Naive thymus-derived CD4-positive, alpha-beta T cell (primary cell): ENCODE measurements at regions of chr9 and their contacts with region 1.

Region 1: DNA sequence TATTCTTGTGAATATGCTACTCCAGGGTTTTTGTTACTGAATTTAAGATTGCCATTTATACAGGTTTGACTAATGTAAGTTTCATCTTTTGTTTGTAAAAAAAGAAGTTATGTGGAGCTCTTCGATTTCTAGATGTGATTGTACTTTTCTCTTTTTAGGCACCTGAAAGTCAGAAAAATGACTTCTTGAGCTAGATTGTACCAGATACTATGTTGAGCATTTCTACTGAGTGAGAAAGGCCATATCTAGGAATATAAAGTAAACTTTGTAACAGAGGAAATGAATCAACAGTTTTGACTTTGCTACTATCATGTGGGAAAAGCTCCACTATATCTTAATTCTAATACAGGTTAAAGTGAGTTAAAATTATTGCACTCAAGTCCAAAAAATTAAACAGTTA is 25.1 kb downstream of the SMC5 start:
- DNase-seq: no peak
- ATAC-seq: no peak
- H3K4me3 ChIP-seq: no peak overlapping the region
- H3K4me3 Mint-ChIP-seq: no peak overlapping the region
- H3K27ac ChIP-seq: no peak overlapping the region
- H3K27ac Mint-ChIP-seq: no peak overlapping the region
- H3K4me1 ChIP-seq: no peaks in the 10 kb centered on the region
- H3K4me1 Mint-ChIP-seq: peaks cover 0 to 20% (median 5%) of the 10 kb centered on the region in 7 donors
- H3K27me3 ChIP-seq: no peaks in the 10 kb centered on the region
- H3K27me3 Mint-ChIP-seq: no peaks in the 10 kb centered on the region

Region 2: GRCh38 chr9:70318002-70318401 is 34.2 kb after region 1 on chr9:
- CTCF ChIA-PET with region 1: no interaction called
- POLR2A ChIA-PET with region 1: no interaction called
- intact Hi-C with region 1: loop called in 1 of 2 experiments (anchors 5 kb)
- DNase-seq: no peak
- ATAC-seq: no peak
- H3K4me3 ChIP-seq: no peak overlapping the region
- H3K4me3 Mint-ChIP-seq: no peak overlapping the region
- H3K27ac ChIP-seq: no peak overlapping the region
- H3K27ac Mint-ChIP-seq: no peak overlapping the region
- H3K4me1 ChIP-seq: no peaks in the 10 kb centered on the region
- H3K4me1 Mint-ChIP-seq: peaks cover 0 to 8% (median 0%) of the 10 kb centered on the region in 7 donors
- H3K27me3 ChIP-seq: no peaks in the 10 kb centered on the region
- H3K27me3 Mint-ChIP-seq: no peaks in the 10 kb centered on the region

Region 3: DNA sequence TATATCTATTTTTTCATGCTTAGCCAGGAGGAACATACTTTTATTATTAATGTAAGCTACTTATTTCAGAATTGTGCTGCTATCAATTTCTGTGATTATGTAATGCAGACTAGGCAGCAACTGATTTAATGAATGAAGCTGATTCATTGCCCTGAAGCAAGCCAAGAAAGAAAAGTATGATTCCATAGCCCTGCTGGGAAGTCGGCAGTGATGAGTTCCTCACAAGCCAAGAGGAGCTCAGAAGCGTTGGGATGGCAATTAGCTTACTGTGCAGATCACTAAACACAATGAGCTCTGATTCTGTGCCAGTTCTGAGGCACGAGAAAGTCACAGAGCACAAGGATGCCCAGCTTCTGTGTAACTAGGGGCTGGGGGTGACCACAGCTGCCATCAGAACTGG is 384.9 kb after region 1 on chr9:
- CTCF ChIA-PET with region 1: no interaction called
- POLR2A ChIA-PET with region 1: no interaction called
- intact Hi-C with region 1: no loop called
- DNase-seq: no peak
- ATAC-seq: no peak
- H3K4me3 ChIP-seq: no peak overlapping the region
- H3K4me3 Mint-ChIP-seq: no peak overlapping the region
- H3K27ac ChIP-seq: no peak overlapping the region
- H3K27ac Mint-ChIP-seq: no peak overlapping the region
- H3K4me1 ChIP-seq: no peaks in the 10 kb centered on the region
- H3K4me1 Mint-ChIP-seq: peaks cover 0 to 29% (median 10%) of the 10 kb centered on the region in 7 donors
- H3K27me3 ChIP-seq: no peaks in the 10 kb centered on the region
- H3K27me3 Mint-ChIP-seq: peaks cover 2 to 5% (median 5%) of the 10 kb centered on the region in 5 donors